GM12878 (cell line): ENCODE measurements at regions of chr22 and their contacts with region 1.

Region 1: GRCh38 chr22:22195265-22196017 is 49.1 kb upstream of the VPREB1 start:
- DNase-seq: peak; percentile 91
- ATAC-seq: peak; percentile 94
- H3K4me3 ChIP-seq: peak overlapping the region; percentile 62; the same call in 1 of the 2 replicates
- H3K27ac ChIP-seq: peak overlapping the region; percentile 63
- H3K4me1 ChIP-seq: peaks cover 18% of the 10 kb centered on the region
- H3K27me3 ChIP-seq: no peaks in the 10 kb centered on the region
- CTCF ChIP-seq: peak; percentile 94 to 95 (median 94); a peak in 5 of 6 replicates
- EP300 ChIP-seq: peak in 1 of 2 experiments; percentile 64; a peak in 3 of 4 replicates
- POLR2A ChIP-seq: peak; percentile 56; the same call in 1 of the 2 replicates
- RAD21 ChIP-seq: peak; percentile 55

Region 2: DNA sequence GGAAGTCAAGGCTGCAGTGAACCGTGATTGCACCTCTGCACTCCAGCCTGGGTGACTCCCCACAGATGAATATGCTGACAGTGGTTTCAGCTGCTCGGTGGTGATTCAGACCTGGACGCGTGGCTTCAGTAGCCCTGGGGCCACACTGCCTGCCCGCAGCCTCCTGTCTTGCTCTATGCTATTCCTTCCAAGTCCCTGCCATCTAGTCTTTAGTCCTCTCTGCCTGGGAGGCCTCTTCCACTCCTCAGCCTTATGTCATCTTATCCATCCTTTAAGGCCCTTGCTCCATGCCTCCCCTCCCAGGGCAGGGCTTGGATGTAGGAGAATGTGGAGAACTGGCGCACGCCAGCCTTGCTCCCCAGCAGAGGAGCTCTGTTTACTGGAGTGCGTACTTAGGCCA is 588.7 kb before region 1 on chr22:
- CTCF ChIA-PET with region 1: no interaction called
- POLR2A ChIA-PET with region 1: no interaction called
- RAD21 ChIA-PET with region 1: no interaction called
- SMC1A ChIA-PET with region 1: no interaction called
- in situ Hi-C with region 1: no loop called
- intact Hi-C with region 1: no loop called
- DNase-seq: no peak
- ATAC-seq: no peak
- H3K4me3 ChIP-seq: no peak overlapping the region
- H3K27ac ChIP-seq: no peak overlapping the region
- H3K4me1 ChIP-seq: peaks cover 4% of the 10 kb centered on the region; the same call in 1 of the 2 replicates
- H3K27me3 ChIP-seq: no peaks in the 10 kb centered on the region
- CTCF ChIP-seq: no peak
- EP300 ChIP-seq: no peak
- POLR2A ChIP-seq: no peak
- RAD21 ChIP-seq: no peak

Region 3: DNA sequence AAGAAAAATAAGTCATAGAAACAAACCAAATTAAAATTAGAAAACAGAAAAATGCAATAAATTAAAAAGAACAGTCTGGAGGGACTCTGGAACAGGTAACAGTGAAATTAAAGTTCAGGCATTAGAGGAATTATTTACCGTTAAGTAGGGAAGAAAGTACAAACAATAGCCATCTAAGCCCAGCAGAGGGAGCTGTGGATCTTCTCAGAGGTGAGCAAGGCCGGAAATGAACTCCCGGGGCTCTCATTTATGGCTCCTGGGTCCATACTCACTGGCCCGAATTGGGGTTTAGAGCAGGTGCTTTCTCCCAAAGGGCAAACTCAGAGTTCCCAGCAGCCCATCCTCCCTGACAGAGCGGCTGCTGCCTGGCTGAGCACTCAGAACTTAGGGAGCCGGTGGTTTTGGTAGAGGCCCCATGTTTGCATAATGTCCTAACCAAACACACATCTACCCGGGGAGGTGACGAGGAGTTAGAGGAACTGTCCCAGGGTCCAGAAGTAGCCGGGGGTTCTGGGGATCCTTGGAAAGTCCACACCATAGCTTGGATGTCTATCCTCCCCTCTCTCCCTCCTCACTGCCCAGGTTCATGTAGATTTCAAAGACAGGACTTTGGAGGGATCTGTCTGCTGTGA is 38.6 kb before region 1 on chr22:
- CTCF ChIA-PET with region 1: interaction called, 27 read pairs
- POLR2A ChIA-PET with region 1: no interaction called
- RAD21 ChIA-PET with region 1: interaction called, 22 read pairs
- SMC1A ChIA-PET with region 1: interaction called, 33 read pairs
- in situ Hi-C with region 1: loop called (anchors 5 kb)
- intact Hi-C with region 1: loop called (anchors 1 kb)
- DNase-seq: peak; percentile 59
- ATAC-seq: peak; percentile 94
- H3K4me3 ChIP-seq: no peak overlapping the region
- H3K27ac ChIP-seq: peak overlapping the region; percentile 86
- H3K4me1 ChIP-seq: peaks cover 10% of the 10 kb centered on the region
- H3K27me3 ChIP-seq: no peaks in the 10 kb centered on the region
- CTCF ChIP-seq: peak; percentile 67 to 79 (median 75)
- EP300 ChIP-seq: 0 out of 4 replicates have a peak, but pooled peaks of 1 of the 2 experiments have one; percentile 23
- POLR2A ChIP-seq: peak; percentile 41
- RAD21 ChIP-seq: peak; percentile 80

Region 4: GRCh38 chr22:22168190-22168940 is 27.1 kb before region 1 on chr22:
- CTCF ChIA-PET with region 1: interaction called, 38 read pairs
- POLR2A ChIA-PET with region 1: interaction called, 3 read pairs
- RAD21 ChIA-PET with region 1: interaction called, 14 read pairs
- SMC1A ChIA-PET with region 1: interaction called, 30 read pairs
- in situ Hi-C with region 1: no loop called
- intact Hi-C with region 1: loop called (anchors 1 kb)
- DNase-seq: peak; percentile 57
- ATAC-seq: peak; percentile 74
- H3K4me3 ChIP-seq: peak overlapping the region; percentile 52; the same call in 1 of the 2 replicates
- H3K27ac ChIP-seq: peak overlapping the region; percentile 83
- H3K4me1 ChIP-seq: peaks cover 15% of the 10 kb centered on the region
- H3K27me3 ChIP-seq: no peaks in the 10 kb centered on the region
- CTCF ChIP-seq: no peak
- EP300 ChIP-seq: no peak
- POLR2A ChIP-seq: no peak; the same call in 1 of the 2 replicates
- RAD21 ChIP-seq: no peak

Region 5: DNA sequence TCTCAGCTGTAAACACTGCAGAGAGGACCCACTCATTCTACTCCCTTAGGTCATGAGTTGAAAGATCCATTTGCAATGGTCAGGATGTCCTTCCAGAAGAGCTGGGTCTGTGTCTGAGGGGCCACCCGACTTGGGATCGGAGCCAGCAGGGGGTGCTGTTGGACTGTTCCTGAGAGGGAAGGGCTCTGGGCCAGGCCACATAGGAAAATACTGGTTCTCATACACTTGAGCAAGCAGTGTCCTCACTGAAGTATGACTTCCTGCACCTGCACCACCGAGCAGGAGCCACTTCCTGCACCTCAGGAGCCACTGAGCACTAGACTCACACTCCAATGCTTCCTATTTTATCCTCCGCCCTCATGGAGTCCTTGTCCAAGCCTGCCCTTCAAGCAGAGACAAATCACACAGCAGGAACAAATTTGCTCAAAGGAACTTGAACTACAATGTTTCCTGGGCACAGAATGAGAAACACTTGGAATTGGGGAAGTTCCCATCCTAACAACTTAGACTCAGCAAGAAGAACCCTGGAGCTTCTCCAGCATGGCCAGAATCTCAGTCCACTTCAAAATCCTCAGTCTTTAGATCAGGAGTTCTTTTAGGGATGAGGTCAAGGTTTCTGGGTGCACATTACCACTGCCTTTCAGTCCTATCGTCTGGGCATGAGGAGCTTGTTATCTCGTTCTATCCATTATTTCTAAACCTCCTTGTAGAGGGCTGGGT is 12.6 kb after region 1 on chr22:
- CTCF ChIA-PET with region 1: interaction called, 43 read pairs
- POLR2A ChIA-PET with region 1: no interaction called
- RAD21 ChIA-PET with region 1: interaction called, 7 read pairs
- SMC1A ChIA-PET with region 1: interaction called, 23 read pairs
- in situ Hi-C with region 1: no loop called
- intact Hi-C with region 1: no loop called
- DNase-seq: peak; percentile 62
- ATAC-seq: peak; percentile 94
- H3K4me3 ChIP-seq: no peak overlapping the region
- H3K27ac ChIP-seq: peak overlapping the region; percentile 45
- H3K4me1 ChIP-seq: peaks cover 3% of the 10 kb centered on the region
- H3K27me3 ChIP-seq: no peaks in the 10 kb centered on the region
- CTCF ChIP-seq: peak; percentile 66 to 78 (median 69); a peak in 5 of 6 replicates
- EP300 ChIP-seq: no peak
- POLR2A ChIP-seq: 0 out of 2 replicates have a peak, but pooled peaks have one; percentile 35
- RAD21 ChIP-seq: peak; percentile 81

Region 6: GRCh38 chr22:22903355-22903777 is 707.9 kb after region 1 on chr22:
- CTCF ChIA-PET with region 1: interaction called, 10 read pairs
- POLR2A ChIA-PET with region 1: no interaction called
- RAD21 ChIA-PET with region 1: interaction called, 8 read pairs
- SMC1A ChIA-PET with region 1: interaction called, 8 read pairs
- in situ Hi-C with region 1: no loop called
- intact Hi-C with region 1: no loop called
- DNase-seq: no peak
- ATAC-seq: peak; percentile 0; the same call in 1 of the 3 replicates
- H3K4me3 ChIP-seq: no peak overlapping the region
- H3K27ac ChIP-seq: peak overlapping the region; percentile 93
- H3K4me1 ChIP-seq: peaks cover 28% of the 10 kb centered on the region
- H3K27me3 ChIP-seq: no peaks in the 10 kb centered on the region
- CTCF ChIP-seq: no peak
- EP300 ChIP-seq: no peak
- POLR2A ChIP-seq: no peak
- RAD21 ChIP-seq: no peak

Region 7: DNA sequence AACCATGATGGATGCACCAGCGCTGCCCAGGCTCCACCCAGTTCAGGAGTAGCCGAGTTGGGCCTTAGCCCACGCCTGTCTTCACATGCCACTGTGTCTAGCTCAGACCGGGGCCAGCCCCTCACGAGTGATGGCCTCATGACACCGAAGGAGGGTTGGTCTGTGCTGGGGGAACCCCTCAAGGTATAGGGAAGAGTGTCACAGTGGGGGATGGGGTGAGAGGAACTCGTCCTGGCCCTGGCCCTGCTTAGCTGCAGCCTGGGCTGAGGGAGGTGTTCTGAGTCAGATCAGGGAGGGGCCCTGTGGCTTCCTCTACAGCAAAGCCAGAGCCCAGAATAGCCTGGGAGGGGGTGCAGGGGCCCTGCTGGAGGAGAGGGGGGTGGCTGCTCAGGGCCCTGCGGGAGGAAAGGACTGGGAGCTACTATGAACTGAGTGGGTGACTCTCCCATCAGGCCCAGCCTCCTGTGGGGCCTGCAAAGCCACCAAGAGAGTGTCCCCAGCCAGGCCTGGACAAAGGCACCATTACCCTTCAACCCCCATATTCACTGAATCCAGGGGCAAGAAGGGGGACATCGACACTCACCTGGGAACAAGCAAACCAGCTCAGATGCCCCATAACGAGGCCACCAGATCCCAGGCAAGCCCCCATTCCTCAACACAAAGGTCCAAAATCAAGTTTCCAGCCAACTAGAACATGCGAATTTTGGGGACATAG is 733.4 kb after region 1 on chr22:
- CTCF ChIA-PET with region 1: interaction called, 11 read pairs
- POLR2A ChIA-PET with region 1: interaction called, 4 read pairs
- RAD21 ChIA-PET with region 1: interaction called, 12 read pairs
- SMC1A ChIA-PET with region 1: interaction called, 13 read pairs
- in situ Hi-C with region 1: no loop called
- intact Hi-C with region 1: no loop called
- DNase-seq: peak; percentile 99
- ATAC-seq: peak; percentile 87
- H3K4me3 ChIP-seq: peak overlapping the region; percentile 14; the same call in 1 of the 2 replicates
- H3K27ac ChIP-seq: peak overlapping the region; percentile 99
- H3K4me1 ChIP-seq: peaks cover 81% of the 10 kb centered on the region
- H3K27me3 ChIP-seq: no peaks in the 10 kb centered on the region
- CTCF ChIP-seq: no peak
- EP300 ChIP-seq: peak; percentile 86 to 89; a peak in 3 of 4 replicates
- POLR2A ChIP-seq: peak; percentile 88
- RAD21 ChIP-seq: peak; percentile 27; the same call in 1 of the 2 replicates

Region 8: DNA sequence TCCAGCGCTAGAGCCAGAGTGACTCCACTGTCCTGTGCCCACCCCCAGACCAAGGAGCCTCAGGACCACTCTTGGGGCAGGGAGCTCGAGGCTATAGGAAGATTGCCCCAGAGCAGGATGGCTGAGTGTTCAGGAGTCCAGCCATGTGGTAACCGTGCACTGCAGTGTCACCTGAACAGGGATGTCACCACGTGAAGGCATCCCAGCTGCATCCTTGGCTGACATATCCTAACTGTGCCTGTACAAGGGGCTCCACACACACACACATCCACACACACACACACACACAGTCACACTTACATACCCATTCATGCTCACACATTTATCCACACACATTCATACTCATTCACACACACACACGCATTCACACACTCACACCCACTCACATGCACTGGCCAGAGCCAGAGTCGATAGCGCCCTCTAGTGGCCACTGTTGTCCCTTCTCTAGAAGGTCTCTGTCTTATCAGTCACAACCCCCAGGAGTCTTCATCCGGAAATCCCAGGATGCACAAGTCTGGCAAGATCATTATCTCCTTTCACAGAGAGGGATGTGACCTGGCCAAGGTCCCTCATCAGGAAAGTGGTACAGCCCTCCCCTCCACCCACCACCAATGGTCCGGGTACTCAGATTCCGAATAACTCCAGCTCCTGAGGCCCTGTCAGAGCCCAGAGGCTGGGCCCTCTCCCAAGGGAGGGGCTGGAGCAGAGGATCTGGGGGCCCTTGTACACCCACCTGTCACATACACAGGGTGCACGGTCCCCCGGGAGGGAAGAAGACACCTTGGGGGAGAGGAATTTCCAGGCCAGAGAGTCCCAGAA is 747.3 kb after region 1 on chr22:
- CTCF ChIA-PET with region 1: interaction called, 43 read pairs
- POLR2A ChIA-PET with region 1: interaction called, 9 read pairs
- RAD21 ChIA-PET with region 1: interaction called, 21 read pairs
- SMC1A ChIA-PET with region 1: interaction called, 8 read pairs
- in situ Hi-C with region 1: no loop called
- intact Hi-C with region 1: no loop called
- DNase-seq: peak; percentile 78
- ATAC-seq: peak; percentile 89
- H3K4me3 ChIP-seq: no peak overlapping the region
- H3K27ac ChIP-seq: peak overlapping the region; percentile 92
- H3K4me1 ChIP-seq: peaks cover 90% of the 10 kb centered on the region
- H3K27me3 ChIP-seq: no peaks in the 10 kb centered on the region
- CTCF ChIP-seq: peak; percentile 84 to 96 (median 87)
- EP300 ChIP-seq: 0 out of 4 replicates have a peak, but pooled peaks of 1 of the 2 experiments have one; percentile 61
- POLR2A ChIP-seq: no peak; the same call in 1 of the 2 replicates
- RAD21 ChIP-seq: peak; percentile 94